HEK293 (cell line): ENCODE measurements at regions of chr2 and their contacts with region 1.

Region 1: GRCh38 chr2:176079831-176080539 is 3.8 kb downstream of the EVX2 start:
- H3K4me3 ChIP-seq: peak overlapping the region; percentile 42
- H3K27ac ChIP-seq: peak overlapping the region; percentile 72; the same call in 1 of the 2 replicates
- H3K4me1 ChIP-seq: no peaks in the 10 kb centered on the region
- CTCF ChIP-seq: peak; percentile 95

Region 2: DNA sequence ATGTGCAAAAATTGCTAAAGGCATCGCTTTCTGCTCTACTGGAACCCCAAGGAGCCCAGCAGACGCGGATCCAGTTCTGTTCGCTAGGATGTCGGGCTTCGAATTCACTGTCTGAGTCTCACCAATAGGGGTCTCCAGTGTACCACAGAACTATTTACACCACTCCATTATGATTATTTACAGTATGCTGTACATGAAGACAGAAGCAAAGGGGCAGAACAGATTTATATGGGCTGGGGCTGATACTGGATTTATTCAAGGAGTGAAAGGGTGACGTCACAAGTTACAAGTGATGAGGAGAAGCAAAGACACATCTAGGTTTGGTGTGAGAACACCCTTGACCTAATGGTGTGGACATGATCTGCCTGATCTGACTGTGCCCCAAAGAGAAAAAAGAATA is 713.2 kb before region 1 on chr2:
- CTCF ChIA-PET with region 1: interaction called, 12 read pairs
- POLR2A ChIA-PET with region 1: no interaction called
- H3K4me3 ChIP-seq: no peak overlapping the region
- H3K27ac ChIP-seq: no peak overlapping the region
- H3K4me1 ChIP-seq: no peaks in the 10 kb centered on the region
- CTCF ChIP-seq: peak; percentile 82

Region 3: DNA sequence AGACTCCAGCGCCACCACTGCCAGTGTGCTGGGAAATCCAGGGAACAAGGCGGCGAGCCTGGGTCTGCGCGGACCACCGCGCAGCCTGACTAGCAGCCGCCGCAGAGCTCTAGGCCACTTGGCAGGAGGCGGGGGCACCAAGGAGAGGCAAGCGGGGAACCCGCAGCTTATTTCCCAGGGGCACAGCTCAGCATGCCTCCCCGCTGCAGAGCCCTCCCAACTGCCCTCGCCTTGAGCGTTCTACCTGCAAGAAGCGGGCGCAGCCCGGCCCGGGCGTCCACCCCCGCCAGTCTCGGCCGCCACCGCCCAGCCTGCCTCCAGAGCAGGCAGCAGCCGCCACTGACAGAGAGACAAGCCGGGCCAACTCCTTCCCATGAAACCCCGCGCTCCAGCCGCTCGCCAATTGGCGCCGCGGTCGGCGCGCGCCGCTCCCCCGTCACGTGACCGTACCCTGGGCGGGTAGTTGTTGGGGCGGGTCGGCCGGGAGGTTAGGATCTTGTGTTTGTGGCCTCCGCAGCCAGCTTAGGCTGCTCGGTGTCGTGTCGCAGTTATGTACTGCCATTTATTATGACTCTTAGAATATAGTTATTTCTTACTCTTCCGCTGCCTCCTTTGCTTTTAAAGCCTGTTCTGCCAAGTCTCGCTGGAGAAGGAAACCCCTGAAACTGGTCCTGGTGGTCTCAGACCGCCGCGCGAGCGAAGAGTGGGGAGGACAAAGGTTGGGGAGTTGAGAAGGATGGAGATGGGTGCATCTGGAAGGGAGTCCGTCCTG is 77.9 kb before region 1 on chr2 and contains the start of gene LNPK:
- CTCF ChIA-PET with region 1: interaction called, 9 read pairs
- POLR2A ChIA-PET with region 1: interaction called, 12 read pairs
- H3K4me3 ChIP-seq: peak within 1 kb of the TSS; percentile 78
- H3K27ac ChIP-seq: peak within 1 kb of the TSS; percentile 71
- H3K4me1 ChIP-seq: 0 out of 2 replicates have a peak, but pooled peaks cover 2% of the 10 kb centered on the region
- CTCF ChIP-seq: peak; percentile 74